HEK293 (cell line): ENCODE measurements at regions of chr18 and their contacts with region 1.

Region 1: GRCh38 chr18:42053188-42053781 is 98.3 kb downstream of the PIK3C3 start:
- H3K4me3 ChIP-seq: no peak overlapping the region
- H3K27ac ChIP-seq: no peak overlapping the region
- H3K4me1 ChIP-seq: no peaks in the 10 kb centered on the region
- CTCF ChIP-seq: peak; percentile 28; the same call in 1 of the 2 replicates

Region 2: GRCh38 chr18:41639218-41639617 is 414.1 kb before region 1 on chr18:
- CTCF ChIA-PET with region 1: no interaction called
- POLR2A ChIA-PET with region 1: no interaction called
- H3K4me3 ChIP-seq: no peak overlapping the region
- H3K27ac ChIP-seq: no peak overlapping the region
- H3K4me1 ChIP-seq: no peaks in the 10 kb centered on the region
- CTCF ChIP-seq: no peak

Region 3: DNA sequence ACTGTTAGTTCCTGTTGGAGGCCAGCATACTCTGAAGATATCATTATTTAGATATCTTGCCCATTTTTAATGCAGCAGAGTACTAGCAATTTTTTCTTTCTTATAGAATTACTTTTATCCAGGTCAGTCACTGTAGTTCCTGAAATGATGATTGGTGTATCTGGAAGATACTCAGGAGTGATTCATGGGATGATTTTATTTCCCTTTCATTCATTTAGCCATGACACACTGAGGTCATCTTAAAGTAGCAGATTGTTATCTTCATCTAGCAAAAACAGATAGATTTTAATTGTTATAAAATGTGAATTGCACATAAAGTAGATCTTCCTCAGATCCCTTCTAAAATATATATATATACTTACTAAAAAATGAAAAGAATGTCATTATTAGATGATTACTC is 10.8 kb after region 1 on chr18:
- CTCF ChIA-PET with region 1: interaction called, 22 read pairs
- POLR2A ChIA-PET with region 1: no interaction called
- H3K4me3 ChIP-seq: no peak overlapping the region
- H3K27ac ChIP-seq: no peak overlapping the region
- H3K4me1 ChIP-seq: no peaks in the 10 kb centered on the region
- CTCF ChIP-seq: no peak

Region 4: GRCh38 chr18:42072407-42072806 is 19.1 kb after region 1 on chr18:
- CTCF ChIA-PET with region 1: interaction called, 22 read pairs
- POLR2A ChIA-PET with region 1: no interaction called
- H3K4me3 ChIP-seq: no peak overlapping the region
- H3K27ac ChIP-seq: no peak overlapping the region
- H3K4me1 ChIP-seq: no peaks in the 10 kb centered on the region
- CTCF ChIP-seq: no peak

Region 5: DNA sequence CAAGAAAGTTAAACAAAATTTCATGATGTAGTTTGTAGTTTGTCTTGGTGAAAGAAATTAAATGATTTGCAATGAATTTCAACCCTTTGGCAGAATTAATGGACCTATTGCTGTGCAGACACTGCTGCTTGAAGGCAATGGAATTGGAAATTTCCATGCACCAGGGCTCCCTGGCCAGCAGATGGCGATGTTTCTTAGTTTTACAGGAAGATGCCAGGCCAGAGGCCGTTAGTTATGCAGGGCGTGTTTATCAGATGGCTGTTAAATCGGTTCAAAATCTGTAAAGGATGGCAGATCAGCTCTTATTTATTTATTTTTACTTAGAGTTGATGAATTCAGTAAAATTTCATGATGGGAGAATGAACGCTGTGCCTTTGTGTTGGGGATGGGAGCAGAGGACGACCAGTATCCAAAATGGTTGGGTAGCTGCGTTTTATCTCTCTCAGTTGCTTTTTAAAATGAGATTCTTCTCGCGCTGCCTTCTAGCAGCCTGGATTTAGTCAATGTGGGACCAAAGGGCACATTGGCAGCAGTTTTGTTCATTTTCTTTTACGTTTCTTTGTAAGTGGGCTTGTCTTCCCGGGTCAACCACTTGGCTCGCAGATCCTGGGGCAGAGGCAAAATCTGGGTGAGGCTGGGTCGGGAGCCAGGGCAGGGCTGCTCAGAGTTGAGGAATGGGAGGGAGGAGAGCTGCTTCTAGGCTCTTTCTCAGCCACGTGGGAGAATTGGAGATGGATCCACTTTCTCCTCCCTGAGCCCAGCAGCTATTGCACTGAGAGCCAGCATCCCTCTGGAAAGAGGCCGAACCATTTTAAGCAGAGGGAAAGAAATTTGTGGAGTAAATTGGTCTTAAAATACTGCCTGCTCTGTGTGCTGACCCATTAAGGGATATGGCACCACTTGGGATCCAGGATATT is 245.7 kb after region 1 on chr18:
- CTCF ChIA-PET with region 1: interaction called, 15 read pairs
- POLR2A ChIA-PET with region 1: no interaction called
- H3K4me3 ChIP-seq: no peak overlapping the region
- H3K27ac ChIP-seq: no peak overlapping the region
- H3K4me1 ChIP-seq: no peaks in the 10 kb centered on the region
- CTCF ChIP-seq: peak; percentile 41